Activated CD4-positive, alpha-beta T cell treated with anti-CD3 and anti-CD28 coated beads for 36 hours (primary cell): ENCODE measurements at regions of chr14 and their contacts with region 1.

Region 1: DNA sequence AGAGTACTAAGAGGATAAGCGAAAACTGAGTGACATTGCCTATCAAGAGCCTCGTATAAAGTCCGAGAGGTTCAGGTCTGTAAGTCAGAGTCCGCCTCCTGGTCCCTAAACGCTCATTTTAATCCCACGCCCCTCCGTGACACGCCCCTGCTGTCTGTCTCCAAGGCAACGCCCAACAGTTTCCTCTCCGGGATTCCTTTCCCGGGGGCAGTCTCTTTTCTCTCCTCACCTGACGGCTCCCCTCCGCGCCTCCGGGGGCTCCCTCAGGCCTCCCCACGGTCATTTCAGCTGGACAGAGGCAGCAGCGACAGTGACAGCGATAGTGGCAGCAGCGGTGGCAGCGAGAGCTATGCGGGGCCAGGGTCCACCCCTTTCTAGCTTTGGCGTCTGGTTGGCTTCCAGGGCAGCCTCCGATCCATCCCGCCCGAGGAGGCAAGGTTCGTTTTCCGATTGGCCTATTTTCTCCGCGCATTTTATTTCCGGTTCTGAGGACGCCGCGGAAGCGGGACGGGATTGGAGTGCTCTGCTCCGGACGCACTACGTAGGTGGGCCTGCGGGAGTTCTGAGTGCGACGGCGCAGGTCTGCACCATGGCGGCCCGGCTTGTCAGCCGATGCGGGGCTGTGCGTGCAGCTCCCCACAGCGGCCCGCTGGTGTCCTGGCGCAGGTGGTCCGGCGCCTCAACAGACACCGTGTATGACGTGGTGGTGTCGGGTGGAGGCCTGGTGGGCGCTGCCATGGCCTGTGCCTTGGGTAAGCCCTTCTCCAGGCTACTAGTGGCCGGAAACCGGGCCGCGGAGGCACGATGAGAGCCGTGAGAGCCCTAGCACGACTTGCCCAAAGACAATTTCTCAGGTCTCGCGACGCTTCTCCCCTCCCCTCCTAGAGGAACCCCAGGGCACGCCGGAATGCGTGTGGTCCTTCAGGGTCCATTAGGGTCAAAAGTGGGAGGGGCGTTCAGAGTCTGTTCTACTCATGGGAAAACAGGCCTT is at the starts of genes COQ6 and FAM161B:
- DNase-seq: peak; percentile 95
- ATAC-seq: peak; percentile 96
- H3K4me3 Mint-ChIP-seq: peak within 1 kb of the TSS; percentile 91
- H3K27ac Mint-ChIP-seq: peak within 1 kb of the TSS; percentile 88
- H3K4me1 Mint-ChIP-seq: peaks cover 14% of the 10 kb centered on the region
- H3K27me3 Mint-ChIP-seq: no peaks in the 10 kb centered on the region
- total RNA-seq, gene COQ6: 14.1 to 17.0 TPM
- total RNA-seq, gene FAM161B: 1.2 to 1.4 TPM

Region 2: DNA sequence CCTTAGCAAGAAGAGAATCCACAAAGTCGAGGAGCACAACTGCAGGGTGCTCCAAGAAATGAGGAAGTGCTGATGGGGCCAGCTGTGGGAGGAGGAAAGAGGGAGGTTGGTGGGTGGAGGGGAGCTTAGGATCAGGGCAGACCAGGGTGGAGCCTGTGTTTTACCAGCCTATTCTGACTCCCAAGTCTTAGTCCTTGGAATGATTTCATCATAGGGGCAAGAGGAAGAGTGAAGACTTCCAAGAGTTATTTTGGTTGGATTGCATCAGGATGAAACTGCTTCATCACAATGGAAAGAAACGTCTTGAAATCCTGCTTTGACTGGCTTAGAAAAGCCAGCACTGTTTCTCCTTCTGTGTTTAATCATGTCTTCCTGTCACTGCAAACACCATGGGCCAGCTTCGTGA is 1250.2 kb before region 1 on chr14:
- CTCF ChIA-PET with region 1: no interaction called
- POLR2A ChIA-PET with region 1: no interaction called
- intact Hi-C with region 1: no loop called
- DNase-seq: no peak
- ATAC-seq: peak; percentile 68
- H3K4me3 Mint-ChIP-seq: no peak overlapping the region
- H3K27ac Mint-ChIP-seq: peak overlapping the region; percentile 44
- H3K4me1 Mint-ChIP-seq: peaks cover 9% of the 10 kb centered on the region
- H3K27me3 Mint-ChIP-seq: no peaks in the 10 kb centered on the region

Region 3: GRCh38 chr14:73136387-73137225 is 813.4 kb before region 1 on chr14 and contains the start of gene PSEN1:
- CTCF ChIA-PET with region 1: no interaction called
- POLR2A ChIA-PET with region 1: no interaction called
- intact Hi-C with region 1: loop called in 1 of 2 experiments (anchors 1 kb)
- DNase-seq: peak; percentile 99
- ATAC-seq: peak; percentile 95
- H3K4me3 Mint-ChIP-seq: peak within 1 kb of the TSS; percentile 86
- H3K27ac Mint-ChIP-seq: peak within 1 kb of the TSS; percentile 82
- H3K4me1 Mint-ChIP-seq: peaks cover 31% of the 10 kb centered on the region
- H3K27me3 Mint-ChIP-seq: no peaks in the 10 kb centered on the region
- total RNA-seq, gene PSEN1: 31.2 to 31.6 TPM

Region 4: GRCh38 chr14:73713803-73714655 is 236.0 kb before region 1 on chr14 and contains the start of gene PNMA1:
- CTCF ChIA-PET with region 1: interaction called, 4 read pairs
- POLR2A ChIA-PET with region 1: no interaction called
- intact Hi-C with region 1: loop called (anchors 2 to 5 kb)
- DNase-seq: peak; percentile 92
- ATAC-seq: peak; percentile 79
- H3K4me3 Mint-ChIP-seq: peak within 1 kb of the TSS; percentile 98
- H3K27ac Mint-ChIP-seq: peak within 1 kb of the TSS; percentile 94
- H3K4me1 Mint-ChIP-seq: peaks cover 13% of the 10 kb centered on the region
- H3K27me3 Mint-ChIP-seq: no peaks in the 10 kb centered on the region
- total RNA-seq, gene PNMA1: 23.2 to 28.8 TPM

Region 5: DNA sequence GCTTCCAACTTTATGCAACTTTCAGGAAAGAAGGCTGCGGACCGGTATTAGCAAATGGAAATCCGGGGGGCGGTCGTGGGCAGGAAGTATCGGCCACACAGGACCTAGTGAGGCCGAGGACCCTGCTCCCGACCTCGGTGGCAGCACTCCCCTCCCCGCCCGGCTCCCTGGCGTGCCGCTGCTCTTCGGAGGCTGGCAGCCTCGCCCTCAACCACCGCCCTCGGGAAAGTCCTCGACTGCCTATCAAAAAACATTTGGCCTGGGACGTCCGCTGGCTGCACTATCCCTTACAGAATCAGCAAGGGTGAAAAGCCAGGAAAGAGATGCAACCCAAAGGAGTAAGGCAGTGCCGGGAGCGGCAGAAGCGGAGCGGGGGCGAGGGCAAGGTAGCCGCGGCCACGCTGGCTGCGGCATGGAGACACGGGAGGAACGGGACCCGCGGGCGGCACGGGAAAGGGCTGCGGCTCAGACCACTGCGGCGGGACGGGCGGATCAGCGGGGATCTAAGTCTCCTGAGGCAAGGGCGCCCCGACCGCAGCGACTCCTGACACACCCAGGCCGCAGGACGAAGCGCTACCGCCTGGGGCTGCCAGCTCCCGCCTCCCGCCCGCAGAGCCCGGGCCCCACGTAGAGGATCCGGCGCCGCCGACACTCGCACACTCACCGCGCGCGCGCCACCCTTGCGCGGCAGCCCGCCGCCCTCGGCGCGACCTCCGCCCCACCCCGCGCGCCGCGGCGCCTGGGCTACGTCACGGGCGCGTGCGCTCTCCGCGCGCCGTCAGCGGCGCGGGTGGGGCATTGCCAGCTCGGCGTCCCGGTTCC is 68.8 kb after region 1 on chr14 and contains the starts of genes BBOF1 and ENTPD5:
- CTCF ChIA-PET with region 1: interaction called, 3 read pairs
- POLR2A ChIA-PET with region 1: interaction called, 3 read pairs
- intact Hi-C with region 1: loop called (anchors 1 to 2 kb)
- DNase-seq: peak; percentile 90
- ATAC-seq: peak; percentile 93
- H3K4me3 Mint-ChIP-seq: peak within 1 kb of the TSS; percentile 80
- H3K27ac Mint-ChIP-seq: peak within 1 kb of the TSS; percentile 93
- H3K4me1 Mint-ChIP-seq: peaks cover 12% of the 10 kb centered on the region
- H3K27me3 Mint-ChIP-seq: no peaks in the 10 kb centered on the region
- total RNA-seq, gene BBOF1: 1.9 to 2.1 TPM
- total RNA-seq, gene ENTPD5: 8.7 to 10.0 TPM

Region 6: DNA sequence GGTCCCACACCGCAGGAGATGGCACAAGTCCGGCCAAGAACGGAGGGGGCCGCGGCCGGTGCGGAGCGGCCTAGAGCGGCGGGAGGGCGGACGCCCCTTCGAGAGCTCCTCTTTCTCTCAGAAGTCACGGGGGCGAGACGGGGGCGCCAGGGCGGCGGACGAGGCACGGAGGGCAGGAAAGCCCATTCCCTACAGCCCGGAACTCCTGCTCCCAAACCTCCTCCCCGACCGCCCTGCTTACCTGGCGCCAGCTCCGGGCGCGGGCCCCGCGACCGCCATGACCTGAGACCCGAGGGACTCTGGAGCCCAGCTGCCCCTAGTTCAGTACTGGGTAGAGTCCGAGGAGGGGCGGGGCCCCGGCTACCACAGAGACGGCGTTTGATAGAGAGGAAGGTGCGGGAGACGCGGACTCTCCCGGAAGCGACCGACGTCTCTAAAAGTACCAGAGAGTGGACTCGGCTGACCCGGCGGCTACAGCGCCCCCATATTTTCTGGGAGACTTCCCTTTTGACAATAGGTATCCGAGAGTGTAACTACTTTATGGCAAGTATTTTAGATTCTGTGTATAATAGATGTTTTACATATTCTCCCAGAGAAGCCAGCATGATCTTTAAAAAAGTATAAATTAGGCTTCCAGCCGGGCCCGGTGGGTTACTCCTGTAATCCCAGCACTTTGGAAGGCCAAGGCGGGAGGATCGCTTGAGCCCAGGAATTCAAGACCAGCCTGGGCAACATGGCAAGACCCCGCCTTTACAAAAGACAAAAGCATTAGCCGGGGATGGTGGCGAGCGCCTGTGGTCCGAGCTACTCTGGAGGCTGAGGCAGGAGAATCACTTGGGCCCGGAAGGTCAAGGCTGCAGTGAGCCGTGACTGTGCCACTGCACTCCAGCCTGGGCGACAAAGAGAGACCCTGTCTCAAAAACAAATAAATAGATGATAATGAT is 352.9 kb after region 1 on chr14 and contains the start of gene ABCD4:
- CTCF ChIA-PET with region 1: no interaction called
- POLR2A ChIA-PET with region 1: no interaction called
- intact Hi-C with region 1: loop called in 1 of 2 experiments (anchors 5 kb)
- DNase-seq: peak; percentile 91
- ATAC-seq: peak; percentile 95
- H3K4me3 Mint-ChIP-seq: peak within 1 kb of the TSS; percentile 98
- H3K27ac Mint-ChIP-seq: peak within 1 kb of the TSS; percentile 98
- H3K4me1 Mint-ChIP-seq: peaks cover 32% of the 10 kb centered on the region
- H3K27me3 Mint-ChIP-seq: no peaks in the 10 kb centered on the region
- total RNA-seq, gene ABCD4: 43.0 to 43.1 TPM